Activated CD4-positive, alpha-beta T cell treated with anti-CD3 and anti-CD28 coated beads for 36 hours (primary cell): ENCODE measurements at regions of chr17 and their contacts with region 1.

Region 1: GRCh38 chr17:4948931-4949320 is 596 bp upstream of the PFN1 start:
- DNase-seq: peak; percentile 88
- ATAC-seq: peak; percentile 39
- H3K4me3 Mint-ChIP-seq: peak overlapping the region; percentile 99
- H3K27ac Mint-ChIP-seq: peak overlapping the region; percentile 100
- H3K4me1 Mint-ChIP-seq: peaks cover 34% of the 10 kb centered on the region
- H3K27me3 Mint-ChIP-seq: no peaks in the 10 kb centered on the region

Region 2: GRCh38 chr17:4796553-4796921 is 152.4 kb before region 1 on chr17:
- CTCF ChIA-PET with region 1: no interaction called
- POLR2A ChIA-PET with region 1: no interaction called
- intact Hi-C with region 1: loop called in 1 of 2 experiments (anchors 5 kb)
- DNase-seq: peak; percentile 58
- ATAC-seq: no peak
- H3K4me3 Mint-ChIP-seq: peak overlapping the region; percentile 94
- H3K27ac Mint-ChIP-seq: peak overlapping the region; percentile 97
- H3K4me1 Mint-ChIP-seq: peaks cover 24% of the 10 kb centered on the region
- H3K27me3 Mint-ChIP-seq: peaks cover 3% of the 10 kb centered on the region

Region 3: GRCh38 chr17:4903051-4903818 is 45.7 kb before region 1 on chr17 and contains the start of gene CHRNE:
- CTCF ChIA-PET with region 1: interaction called, 4 read pairs
- POLR2A ChIA-PET with region 1: no interaction called
- intact Hi-C with region 1: loop called (anchors 2 to 5 kb)
- DNase-seq: peak; percentile 89
- ATAC-seq: peak; percentile 44
- H3K4me3 Mint-ChIP-seq: peak within 1 kb of the TSS; percentile 65
- H3K27ac Mint-ChIP-seq: peak within 1 kb of the TSS; percentile 72
- H3K4me1 Mint-ChIP-seq: peaks cover 26% of the 10 kb centered on the region
- H3K27me3 Mint-ChIP-seq: no peaks in the 10 kb centered on the region
- total RNA-seq, gene CHRNE: 0.59 to 0.84 TPM

Region 4: DNA sequence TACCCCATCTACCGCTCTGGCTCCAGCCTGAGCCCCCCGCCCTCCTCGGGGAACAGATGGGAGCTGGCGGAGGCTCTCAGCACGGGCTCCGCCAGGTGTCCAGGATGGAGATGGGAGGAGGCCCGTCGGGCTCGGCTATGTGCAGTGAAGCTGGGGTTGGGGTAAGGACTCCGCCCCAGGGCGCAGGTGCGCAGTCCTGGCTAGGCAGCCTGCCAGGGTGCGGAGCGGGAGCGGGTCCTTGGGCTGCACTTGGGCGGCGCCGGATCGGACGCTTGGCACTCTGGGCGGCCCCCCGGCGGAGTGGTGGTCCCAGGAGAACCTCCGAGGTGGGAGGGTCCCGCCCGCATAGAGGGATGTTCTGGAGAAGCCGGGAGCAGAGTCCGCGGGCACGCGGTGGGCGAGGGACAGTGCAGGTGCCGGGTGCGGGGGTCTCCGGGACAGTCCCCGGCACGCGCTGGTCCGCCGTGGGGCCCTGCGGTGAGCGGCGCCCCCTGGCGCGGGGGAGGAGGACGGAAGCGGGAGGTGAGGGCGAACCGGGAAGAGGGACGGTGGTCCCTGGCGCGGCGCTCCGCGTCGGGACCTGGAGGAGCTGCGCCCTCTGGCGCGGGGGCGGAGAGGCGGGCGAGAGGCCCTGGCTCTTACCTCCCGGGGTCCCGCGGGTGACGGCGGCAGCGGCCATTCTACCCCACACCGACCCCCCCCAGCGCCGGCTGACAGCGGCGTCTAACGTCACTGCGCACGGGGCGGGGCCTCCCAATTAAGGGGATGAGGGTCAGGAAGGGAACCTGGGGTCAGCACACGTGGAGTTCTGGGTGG is 38.2 kb after region 1 on chr17 and contains the start of gene CAMTA2:
- CTCF ChIA-PET with region 1: no interaction called
- POLR2A ChIA-PET with region 1: no interaction called
- intact Hi-C with region 1: loop called in 1 of 2 experiments (anchors 1 kb)
- DNase-seq: peak; percentile 91
- ATAC-seq: peak; percentile 87
- H3K4me3 Mint-ChIP-seq: peak within 1 kb of the TSS; percentile 93
- H3K27ac Mint-ChIP-seq: peak within 1 kb of the TSS; percentile 91
- H3K4me1 Mint-ChIP-seq: peaks cover 33% of the 10 kb centered on the region
- H3K27me3 Mint-ChIP-seq: no peaks in the 10 kb centered on the region
- total RNA-seq, gene CAMTA2: 98.2 to 124 TPM

Region 5: DNA sequence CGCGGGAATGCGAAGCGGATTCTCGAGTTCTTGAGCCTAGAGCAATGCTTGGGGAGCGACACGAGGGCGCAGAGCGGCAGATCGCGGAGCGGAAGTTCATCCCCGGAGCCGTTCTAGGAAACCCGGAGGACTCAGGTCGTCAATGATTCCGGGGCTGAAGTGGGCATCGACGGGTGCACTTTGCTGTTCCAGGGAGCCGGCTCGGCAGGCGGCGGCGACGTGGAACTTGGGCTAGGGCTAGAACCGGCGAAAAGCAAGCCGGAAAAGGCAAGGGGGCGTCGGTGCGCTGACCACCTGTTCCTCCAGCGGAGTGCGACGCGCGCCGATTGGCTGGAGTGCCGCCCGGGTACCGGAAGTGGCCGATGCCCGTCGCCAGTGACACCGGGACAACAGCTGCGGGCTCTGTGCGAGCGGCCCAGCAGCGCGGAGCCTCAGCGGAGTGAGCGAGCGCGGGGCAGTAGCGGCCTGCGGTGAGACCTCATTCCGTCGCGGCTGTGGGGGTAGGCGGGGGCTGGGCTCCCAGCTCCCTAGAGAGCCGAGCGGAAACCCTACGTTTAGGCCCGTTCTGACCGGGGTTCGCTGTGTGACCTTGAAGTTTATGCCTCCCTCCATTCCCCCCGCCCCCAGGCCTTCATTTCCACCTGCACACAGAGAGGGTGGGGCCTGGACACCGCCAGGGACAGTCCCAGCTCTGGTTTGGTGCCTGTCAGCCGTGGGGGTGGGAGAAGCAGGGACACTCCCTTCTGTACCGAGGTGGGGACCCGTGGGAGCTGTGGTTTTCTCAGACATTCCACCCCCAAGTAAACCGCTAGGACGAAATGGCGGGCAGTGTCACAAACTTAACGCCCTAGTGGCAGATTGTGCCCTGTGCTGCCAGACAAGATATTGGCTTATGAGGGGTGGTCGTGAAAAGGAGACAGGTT is 129.4 kb after region 1 on chr17 and contains the start of gene ZFP3:
- CTCF ChIA-PET with region 1: no interaction called
- POLR2A ChIA-PET with region 1: no interaction called
- intact Hi-C with region 1: loop called in 1 of 2 experiments (anchors 1 kb)
- DNase-seq: peak; percentile 89
- ATAC-seq: peak; percentile 90
- H3K4me3 Mint-ChIP-seq: peak within 1 kb of the TSS; percentile 73
- H3K27ac Mint-ChIP-seq: peak within 1 kb of the TSS; percentile 95
- H3K4me1 Mint-ChIP-seq: peaks cover 30% of the 10 kb centered on the region
- H3K27me3 Mint-ChIP-seq: no peaks in the 10 kb centered on the region
- total RNA-seq, gene ZFP3: 2.2 to 2.8 TPM

Region 6: GRCh38 chr17:5281814-5282653 is 333.1 kb after region 1 on chr17 and contains the start of gene RABEP1:
- CTCF ChIA-PET with region 1: no interaction called
- POLR2A ChIA-PET with region 1: interaction called, 4 read pairs
- intact Hi-C with region 1: loop called in 1 of 2 experiments (anchors 1 kb)
- DNase-seq: peak; percentile 97
- ATAC-seq: peak; percentile 81
- H3K4me3 Mint-ChIP-seq: peak within 1 kb of the TSS; percentile 86
- H3K27ac Mint-ChIP-seq: peak within 1 kb of the TSS; percentile 90
- H3K4me1 Mint-ChIP-seq: peaks cover 32% of the 10 kb centered on the region
- H3K27me3 Mint-ChIP-seq: no peaks in the 10 kb centered on the region
- total RNA-seq, gene RABEP1: 60.4 to 66.2 TPM